ENCODE measurements at regions of chr2 and their contacts with region 1.

Region 1: DNA sequence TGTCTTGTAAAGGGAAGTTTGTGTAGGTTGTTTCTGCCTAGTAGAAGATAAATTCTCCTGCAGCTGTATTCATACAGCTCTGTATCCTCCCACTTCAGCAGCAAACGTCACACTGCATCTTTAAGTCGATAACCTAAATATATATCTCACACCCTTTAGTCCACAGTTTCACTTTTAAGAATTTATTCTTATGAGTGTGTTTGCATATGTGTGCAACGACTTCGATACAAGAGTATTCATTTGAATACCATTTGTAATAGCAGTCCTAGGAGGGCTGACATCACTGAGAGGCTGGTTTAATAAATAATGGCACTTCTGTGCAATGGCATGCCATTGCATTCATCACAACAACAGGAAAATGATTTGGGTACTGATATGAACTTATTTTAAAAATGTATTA is 63.8 kb upstream of the MSH6 start:
- DNase-seq: peak; percentile 83
- H3K4me3 ChIP-seq: peak overlapping the region; percentile 33
- H3K27ac ChIP-seq: peak overlapping the region; percentile 100
- H3K4me1 ChIP-seq: peaks cover 100% of the 10 kb centered on the region
- CTCF ChIP-seq: no peak

Region 2: GRCh38 chr2:47708801-47709499 is 10.1 kb before region 1 on chr2:
- CTCF ChIA-PET with region 1: no interaction called
- POLR2A ChIA-PET with region 1: interaction called, 60 read pairs
- intact Hi-C with region 1: no loop called
- DNase-seq: no peak
- H3K4me3 ChIP-seq: no peak overlapping the region
- H3K27ac ChIP-seq: peak overlapping the region; percentile 65
- H3K4me1 ChIP-seq: peaks cover 59% of the 10 kb centered on the region
- CTCF ChIP-seq: no peak

Region 3: GRCh38 chr2:47735136-47735869 is 16.2 kb after region 1 on chr2:
- CTCF ChIA-PET with region 1: interaction called, 9 read pairs
- POLR2A ChIA-PET with region 1: interaction called, 78 read pairs
- intact Hi-C with region 1: loop called (anchors 1 kb)
- DNase-seq: no peak
- H3K4me3 ChIP-seq: peak overlapping the region; percentile 28
- H3K27ac ChIP-seq: peak overlapping the region; percentile 94
- H3K4me1 ChIP-seq: peaks cover 82% of the 10 kb centered on the region
- CTCF ChIP-seq: 0 out of 2 replicates have a peak, but pooled peaks have one; percentile 5

Region 4: GRCh38 chr2:47741094-47741493 is 22.0 kb after region 1 on chr2:
- CTCF ChIA-PET with region 1: interaction called, 9 read pairs
- POLR2A ChIA-PET with region 1: interaction called, 78 read pairs
- intact Hi-C with region 1: loop called (anchors 1 kb)
- DNase-seq: no peak
- H3K4me3 ChIP-seq: no peak overlapping the region
- H3K27ac ChIP-seq: peak overlapping the region; percentile 32
- H3K4me1 ChIP-seq: peaks cover 68% of the 10 kb centered on the region
- CTCF ChIP-seq: no peak

Region 5: DNA sequence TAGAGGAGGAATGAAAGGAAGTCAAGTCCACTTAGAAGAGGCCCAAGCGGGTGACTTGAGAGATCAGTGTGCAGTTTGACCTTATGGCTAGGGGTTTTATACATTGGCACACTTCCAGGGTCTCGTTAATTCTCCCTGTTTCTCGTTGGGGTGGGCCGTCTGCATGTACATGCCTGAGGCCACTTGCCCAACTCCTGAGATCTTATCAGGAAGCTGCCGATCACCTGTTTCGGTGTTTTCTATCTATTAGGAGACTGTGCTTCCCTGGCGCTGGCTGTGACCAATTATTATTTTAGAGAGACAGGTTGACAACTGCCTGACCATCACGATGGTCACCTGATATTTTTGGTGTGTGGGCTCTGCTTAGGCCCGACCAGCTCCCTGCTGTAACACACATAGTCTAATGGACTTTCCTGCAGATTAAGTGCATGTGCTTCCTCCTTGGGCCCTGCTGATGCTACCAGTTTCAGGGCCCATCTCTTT is 32.8 kb after region 1 on chr2:
- CTCF ChIA-PET with region 1: no interaction called
- POLR2A ChIA-PET with region 1: interaction called, 20 read pairs
- intact Hi-C with region 1: loop called (anchors 1 kb)
- DNase-seq: no peak
- H3K4me3 ChIP-seq: no peak overlapping the region
- H3K27ac ChIP-seq: peak overlapping the region; percentile 79
- H3K4me1 ChIP-seq: peaks cover 67% of the 10 kb centered on the region
- CTCF ChIP-seq: no peak

Region 6: GRCh38 chr2:47862949-47863348 is 143.8 kb after region 1 on chr2:
- CTCF ChIA-PET with region 1: no interaction called
- POLR2A ChIA-PET with region 1: no interaction called
- intact Hi-C with region 1: no loop called
- DNase-seq: no peak
- H3K4me3 ChIP-seq: no peak overlapping the region
- H3K27ac ChIP-seq: no peak overlapping the region
- H3K4me1 ChIP-seq: peaks cover 30% of the 10 kb centered on the region
- CTCF ChIP-seq: no peak